Naive thymus-derived CD4-positive, alpha-beta T cell (primary cell): ENCODE measurements at regions of chr16 and their contacts with region 1.

Region 1: DNA sequence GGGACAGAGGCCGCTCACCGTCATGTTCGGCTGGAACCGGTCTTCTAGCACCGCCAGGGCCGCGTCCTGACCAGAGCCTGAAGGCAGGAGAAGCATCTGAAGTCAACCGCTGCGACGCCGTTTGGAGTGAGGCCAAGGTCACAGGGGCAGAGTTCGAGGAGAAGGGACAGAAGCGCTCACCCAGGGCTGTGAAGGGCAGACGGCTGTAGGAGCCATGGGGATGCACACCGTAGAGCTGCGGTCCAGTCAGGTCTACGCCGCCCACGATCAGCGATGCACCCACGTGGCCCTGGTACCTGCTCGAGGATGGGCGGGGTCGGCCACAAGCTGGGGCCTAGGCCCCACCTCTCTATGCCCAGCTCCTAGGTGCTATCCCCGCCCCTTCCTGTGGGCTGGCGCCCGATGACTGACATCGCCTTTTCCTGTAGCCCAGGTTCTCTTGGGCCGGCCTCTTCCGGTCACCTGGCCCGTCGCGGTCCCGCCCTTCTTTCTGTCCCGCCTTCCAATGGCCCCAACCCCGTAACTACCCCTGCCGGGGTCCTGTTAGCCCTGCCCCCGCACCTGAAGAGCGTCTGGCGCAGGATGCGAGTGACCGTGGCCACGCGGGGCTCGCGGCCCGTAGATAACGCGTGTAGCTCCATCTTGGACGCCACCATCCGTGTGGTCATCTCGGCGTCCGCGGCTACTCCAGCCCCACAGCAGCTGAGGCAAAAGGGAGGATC is 1.1 kb downstream of the PSMB10 start:
- DNase-seq: peak; percentile 71 to 95 (median 91)
- ATAC-seq: peak; percentile 96
- H3K4me3 ChIP-seq: peak overlapping the region; percentile 99
- H3K4me3 Mint-ChIP-seq: peak overlapping the region; percentile 89 to 100 (median 100)
- H3K27ac ChIP-seq: peak overlapping the region; percentile 77
- H3K27ac Mint-ChIP-seq: peak overlapping the region; percentile 87 to 99 (median 99)
- H3K4me1 ChIP-seq: peaks cover 21 to 32% of the 10 kb centered on the region in 2 donors
- H3K4me1 Mint-ChIP-seq: peaks cover 28 to 48% (median 35%) of the 10 kb centered on the region in 7 donors
- H3K27me3 ChIP-seq: no peaks in the 10 kb centered on the region
- H3K27me3 Mint-ChIP-seq: peaks cover 0 to 3% (median 0%) of the 10 kb centered on the region in 5 donors

Region 2: DNA sequence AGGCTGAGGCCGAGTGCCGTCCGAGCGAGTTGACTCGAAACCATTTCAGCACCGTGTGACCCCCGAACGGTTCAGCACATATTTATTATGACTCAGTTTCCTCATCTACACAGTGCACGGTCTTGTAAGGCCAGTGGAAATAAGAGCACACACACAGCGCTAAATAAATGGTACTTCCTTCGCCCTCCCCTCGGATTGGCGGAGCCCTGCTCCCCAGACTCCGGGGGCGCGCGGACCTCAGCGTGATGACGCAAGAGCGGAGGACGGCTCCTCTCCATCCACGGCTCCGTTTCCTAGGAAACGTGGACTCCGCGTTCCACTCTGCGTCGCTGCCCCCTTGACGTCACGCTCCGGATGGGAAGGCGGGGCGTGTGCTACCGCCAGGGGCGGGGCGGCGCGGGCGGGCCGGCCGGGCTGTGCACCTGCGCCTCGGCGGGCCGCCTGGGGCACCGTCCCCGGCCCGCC is 275.0 kb before region 1 on chr16 and contains the start of gene PARD6A:
- CTCF ChIA-PET with region 1: no interaction called
- POLR2A ChIA-PET with region 1: interaction called, 4 read pairs
- intact Hi-C with region 1: loop called (anchors 1 to 2 kb)
- DNase-seq: peak; percentile 81 to 95 (median 93)
- ATAC-seq: peak; percentile 89
- H3K4me3 ChIP-seq: peak within 1 kb of the TSS; percentile 99
- H3K4me3 Mint-ChIP-seq: peak within 1 kb of the TSS; percentile 90 to 97 (median 94)
- H3K27ac ChIP-seq: peak within 1 kb of the TSS; percentile 97
- H3K27ac Mint-ChIP-seq: peak within 1 kb of the TSS; percentile 84 to 98 (median 97)
- H3K4me1 ChIP-seq: peaks cover 11 to 17% of the 10 kb centered on the region in 2 donors
- H3K4me1 Mint-ChIP-seq: peaks cover 15 to 40% (median 22%) of the 10 kb centered on the region in 7 donors
- H3K27me3 ChIP-seq: no peaks in the 10 kb centered on the region
- H3K27me3 Mint-ChIP-seq: no peaks in the 10 kb centered on the region
- total RNA-seq, gene PARD6A: 4.5 to 11.2 (median 4.7) TPM

Region 3: GRCh38 chr16:67685388-67686112 is 250.0 kb before region 1 on chr16:
- CTCF ChIA-PET with region 1: no interaction called
- POLR2A ChIA-PET with region 1: no interaction called
- intact Hi-C with region 1: no loop called
- DNase-seq: no peak
- ATAC-seq: no peak
- H3K4me3 ChIP-seq: no peak overlapping the region
- H3K4me3 Mint-ChIP-seq: peak overlapping the region in 3 of 10 donors; percentile 9 to 42 (median 32)
- H3K27ac ChIP-seq: peak overlapping the region; percentile 45
- H3K27ac Mint-ChIP-seq: peak overlapping the region in 8 of 9 donors; percentile 14 to 85 (median 74)
- H3K4me1 ChIP-seq: peaks cover 0 to 7% of the 10 kb centered on the region in 2 donors
- H3K4me1 Mint-ChIP-seq: peaks cover 0 to 18% (median 11%) of the 10 kb centered on the region in 7 donors
- H3K27me3 ChIP-seq: no peaks in the 10 kb centered on the region
- H3K27me3 Mint-ChIP-seq: no peaks in the 10 kb centered on the region

Region 4: GRCh38 chr16:67833418-67834241 is 101.9 kb before region 1 on chr16:
- CTCF ChIA-PET with region 1: no interaction called
- POLR2A ChIA-PET with region 1: interaction called, 7 read pairs
- intact Hi-C with region 1: loop called in 1 of 2 experiments (anchors 1 kb)
- DNase-seq: peak; percentile 83 to 92 (median 89)
- ATAC-seq: peak; percentile 100
- H3K4me3 ChIP-seq: peak overlapping the region; percentile 82
- H3K4me3 Mint-ChIP-seq: peak overlapping the region; percentile 90 to 96 (median 93)
- H3K27ac ChIP-seq: peak overlapping the region; percentile 70
- H3K27ac Mint-ChIP-seq: peak overlapping the region; percentile 73 to 93 (median 82)
- H3K4me1 ChIP-seq: peaks cover 8 to 9% of the 10 kb centered on the region in 2 donors
- H3K4me1 Mint-ChIP-seq: peaks cover 11 to 19% (median 15%) of the 10 kb centered on the region in 7 donors
- H3K27me3 ChIP-seq: no peaks in the 10 kb centered on the region
- H3K27me3 Mint-ChIP-seq: no peaks in the 10 kb centered on the region

Region 5: GRCh38 chr16:67892899-67893742 is 42.4 kb before region 1 on chr16 and contains the start of gene PSKH1:
- CTCF ChIA-PET with region 1: no interaction called
- POLR2A ChIA-PET with region 1: interaction called, 25 read pairs
- intact Hi-C with region 1: loop called (anchors 1 kb)
- DNase-seq: peak; percentile 77 to 92 (median 84)
- ATAC-seq: peak; percentile 99
- H3K4me3 ChIP-seq: peak within 1 kb of the TSS; percentile 89
- H3K4me3 Mint-ChIP-seq: peak within 1 kb of the TSS; percentile 86 to 97 (median 94)
- H3K27ac ChIP-seq: peak within 1 kb of the TSS; percentile 94
- H3K27ac Mint-ChIP-seq: peak within 1 kb of the TSS; percentile 85 to 98 (median 97)
- H3K4me1 ChIP-seq: peaks cover 12 to 15% of the 10 kb centered on the region in 2 donors
- H3K4me1 Mint-ChIP-seq: peaks cover 22 to 48% (median 35%) of the 10 kb centered on the region in 7 donors
- H3K27me3 ChIP-seq: no peaks in the 10 kb centered on the region
- H3K27me3 Mint-ChIP-seq: no peaks in the 10 kb centered on the region
- total RNA-seq, gene PSKH1: 18.0 to 28.5 (median 23.3) TPM

Region 6: GRCh38 chr16:67993189-67994039 is 57.9 kb after region 1 on chr16:
- CTCF ChIA-PET with region 1: interaction called, 4 read pairs
- POLR2A ChIA-PET with region 1: interaction called, 10 read pairs
- intact Hi-C with region 1: no loop called
- DNase-seq: peak; percentile 74 to 90 (median 83)
- ATAC-seq: peak; percentile 93
- H3K4me3 ChIP-seq: peak overlapping the region; percentile 65
- H3K4me3 Mint-ChIP-seq: peak overlapping the region; percentile 83 to 94 (median 92)
- H3K27ac ChIP-seq: peak overlapping the region; percentile 87
- H3K27ac Mint-ChIP-seq: peak overlapping the region; percentile 93 to 99 (median 97)
- H3K4me1 ChIP-seq: peaks cover 8 to 25% of the 10 kb centered on the region in 2 donors
- H3K4me1 Mint-ChIP-seq: peaks cover 10 to 48% (median 35%) of the 10 kb centered on the region in 7 donors
- H3K27me3 ChIP-seq: no peaks in the 10 kb centered on the region
- H3K27me3 Mint-ChIP-seq: no peaks in the 10 kb centered on the region

Region 7: DNA sequence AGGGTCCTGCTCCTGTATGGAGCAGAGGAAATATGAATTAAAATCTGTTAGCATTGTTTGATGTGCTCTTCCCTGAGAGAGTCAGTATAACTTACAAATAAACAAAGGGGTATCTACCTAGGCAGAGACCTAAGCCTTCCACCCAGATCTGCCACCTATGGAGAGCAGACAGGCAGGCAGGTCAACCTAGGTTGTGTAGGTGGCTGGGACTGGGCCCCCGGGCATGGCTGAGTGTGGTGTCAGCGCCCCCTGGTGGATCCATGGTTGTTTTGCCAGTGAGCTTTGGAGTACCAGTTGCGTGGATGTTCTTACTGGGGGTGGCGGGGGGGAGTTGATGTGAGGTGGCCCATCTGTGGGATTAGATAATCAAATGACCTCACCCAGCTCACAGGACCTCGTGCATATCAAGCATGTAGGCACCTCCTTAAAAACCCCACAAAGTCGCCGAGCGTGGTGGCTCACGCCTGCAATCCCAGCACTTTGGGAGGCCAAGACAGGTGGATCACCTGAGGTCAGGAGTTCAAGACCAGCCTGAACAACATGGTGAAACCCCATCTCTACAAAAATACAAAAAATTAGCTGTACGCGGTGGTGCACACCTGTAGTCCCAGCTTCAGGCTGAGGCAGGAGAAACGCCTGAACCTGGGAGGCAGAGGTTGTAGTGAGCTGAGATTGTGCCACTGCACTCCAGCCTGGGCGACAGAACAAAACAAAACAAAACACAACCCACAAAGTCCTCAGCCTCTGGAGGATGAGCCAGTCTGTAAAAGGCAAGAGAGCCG is 105.1 kb after region 1 on chr16:
- CTCF ChIA-PET with region 1: interaction called, 10 read pairs
- POLR2A ChIA-PET with region 1: interaction called, 4 read pairs
- intact Hi-C with region 1: loop called (anchors 1 kb)
- DNase-seq: peak; percentile 81 to 95 (median 87)
- ATAC-seq: peak; percentile 100
- H3K4me3 ChIP-seq: no peak overlapping the region
- H3K4me3 Mint-ChIP-seq: peak overlapping the region in 1 of 10 donors; percentile 9
- H3K27ac ChIP-seq: peak overlapping the region; percentile 26
- H3K27ac Mint-ChIP-seq: peak overlapping the region; percentile 28 to 87 (median 61)
- H3K4me1 ChIP-seq: peaks cover 4 to 5% of the 10 kb centered on the region in 2 donors
- H3K4me1 Mint-ChIP-seq: peaks cover 5 to 26% (median 18%) of the 10 kb centered on the region in 7 donors
- H3K27me3 ChIP-seq: no peaks in the 10 kb centered on the region
- H3K27me3 Mint-ChIP-seq: no peaks in the 10 kb centered on the region

Region 8: GRCh38 chr16:68310761-68311511 is 375.4 kb after region 1 on chr16 and contains the starts of genes PRMT7 and SLC7A6OS:
- CTCF ChIA-PET with region 1: no interaction called
- POLR2A ChIA-PET with region 1: no interaction called
- intact Hi-C with region 1: loop called (anchors 5 kb)
- DNase-seq: peak; percentile 77 to 94 (median 92)
- ATAC-seq: peak; percentile 99
- H3K4me3 ChIP-seq: peak within 1 kb of the TSS; percentile 99
- H3K4me3 Mint-ChIP-seq: peak within 1 kb of the TSS; percentile 88 to 100 (median 98)
- H3K27ac ChIP-seq: peak within 1 kb of the TSS; percentile 91
- H3K27ac Mint-ChIP-seq: peak within 1 kb of the TSS; percentile 77 to 99 (median 96)
- H3K4me1 ChIP-seq: peaks cover 25 to 32% of the 10 kb centered on the region in 2 donors
- H3K4me1 Mint-ChIP-seq: peaks cover 33 to 69% (median 59%) of the 10 kb centered on the region in 7 donors
- H3K27me3 ChIP-seq: no peaks in the 10 kb centered on the region
- H3K27me3 Mint-ChIP-seq: no peaks in the 10 kb centered on the region
- total RNA-seq, gene PRMT7: 60.8 to 95.1 (median 89.4) TPM
- total RNA-seq, gene SLC7A6OS: 31.4 to 50.3 (median 34.8) TPM